ENCODE measurements at regions of chr12 and their contacts with region 1.

Region 1: DNA sequence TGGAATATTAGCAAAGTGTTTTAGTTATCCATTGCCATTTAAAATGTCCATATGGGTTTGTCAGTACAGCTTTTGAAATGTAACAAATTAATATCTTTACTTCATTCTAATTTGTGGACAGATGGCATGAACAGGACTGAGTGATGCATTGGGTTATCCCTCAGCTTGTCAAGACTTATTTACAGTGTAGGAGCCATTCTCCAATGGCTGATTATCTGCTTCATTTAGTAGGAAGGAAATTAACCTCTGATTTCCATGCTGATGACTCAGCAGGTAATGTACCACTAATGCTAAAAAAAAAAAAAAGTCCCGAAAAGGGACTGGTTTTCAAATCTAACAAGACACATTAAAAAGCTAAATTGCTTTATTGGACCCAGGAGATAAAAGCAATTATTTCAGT is 1149.0 kb upstream of the USP15 start:
- DNase-seq: no peak
- ATAC-seq: no peak

Region 2: DNA sequence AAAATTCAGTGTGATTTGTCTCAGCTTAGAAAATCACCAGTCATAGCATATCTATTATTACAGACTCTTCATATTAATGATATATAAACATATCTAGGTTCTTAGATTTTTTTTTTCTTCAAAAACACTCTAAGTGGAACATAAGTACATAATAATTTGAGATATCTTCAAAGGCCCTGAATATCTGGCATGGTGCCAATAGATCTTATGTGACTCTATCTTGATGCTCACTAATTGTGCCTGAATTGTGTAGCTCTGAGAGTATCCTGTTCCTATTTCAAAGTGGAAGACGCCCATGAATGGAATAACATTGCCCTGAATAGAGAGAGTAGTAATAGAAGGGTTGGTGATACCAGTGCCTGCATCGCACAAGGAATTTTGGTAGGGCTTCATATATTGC is 163.7 kb before region 1 on chr12:
- intact Hi-C with region 1: no loop called
- DNase-seq: no peak
- ATAC-seq: no peak

Region 3: DNA sequence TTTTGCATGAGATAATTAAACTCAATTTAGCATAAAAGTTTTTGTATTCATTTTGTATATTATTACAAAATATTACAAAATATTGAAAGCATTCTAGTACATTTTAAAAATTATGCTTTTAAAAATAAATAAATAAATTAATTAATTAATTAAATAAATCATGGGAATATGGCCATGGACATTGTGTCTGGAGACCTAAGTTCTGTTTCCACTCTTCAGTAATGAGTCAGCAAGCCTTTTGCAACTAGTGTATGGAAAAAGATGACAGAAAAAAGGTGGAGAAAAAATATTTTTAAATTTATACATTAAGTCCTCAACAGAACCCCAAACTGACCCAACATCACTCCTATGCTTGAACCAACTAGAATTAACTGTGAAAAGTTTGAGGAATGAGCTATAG is 38.5 kb before region 1 on chr12:
- intact Hi-C with region 1: loop called in 1 of 2 experiments (anchors 10 kb)
- DNase-seq: no peak
- ATAC-seq: no peak

Measured in left cardiac atrium (tissue), 4 donors.